Activated CD4-positive, alpha-beta T cell treated with anti-CD3 and anti-CD28 coated beads for 36 hours (primary cell): ENCODE measurements at regions of chr7 and their contacts with region 1.

Region 1: GRCh38 chr7:64665980-64666662 is at the start of gene ZNF107:
- DNase-seq: peak; percentile 92
- ATAC-seq: peak; percentile 100
- H3K4me3 Mint-ChIP-seq: peak within 1 kb of the TSS; percentile 95
- H3K27ac Mint-ChIP-seq: peak within 1 kb of the TSS; percentile 97
- H3K4me1 Mint-ChIP-seq: peaks cover 48% of the 10 kb centered on the region
- H3K27me3 Mint-ChIP-seq: no peaks in the 10 kb centered on the region
- total RNA-seq, gene ZNF107: 16.5 to 19.7 TPM

Region 2: GRCh38 chr7:63925623-63926460 is 740.3 kb before region 1 on chr7:
- CTCF ChIA-PET with region 1: no interaction called
- POLR2A ChIA-PET with region 1: no interaction called
- intact Hi-C with region 1: loop called in 1 of 2 experiments (anchors 1 kb)
- DNase-seq: peak; percentile 95
- ATAC-seq: peak; percentile 97
- H3K4me3 Mint-ChIP-seq: peak overlapping the region; percentile 87
- H3K27ac Mint-ChIP-seq: peak overlapping the region; percentile 93
- H3K4me1 Mint-ChIP-seq: peaks cover 16% of the 10 kb centered on the region
- H3K27me3 Mint-ChIP-seq: no peaks in the 10 kb centered on the region

Region 3: GRCh38 chr7:64313740-64314491 is 352.2 kb before region 1 on chr7 and contains the start of gene ZNF736:
- CTCF ChIA-PET with region 1: no interaction called
- POLR2A ChIA-PET with region 1: interaction called, 4 read pairs
- intact Hi-C with region 1: loop called (anchors 2 to 5 kb)
- DNase-seq: peak; percentile 93
- ATAC-seq: peak; percentile 100
- H3K4me3 Mint-ChIP-seq: peak within 1 kb of the TSS; percentile 89
- H3K27ac Mint-ChIP-seq: peak within 1 kb of the TSS; percentile 99
- H3K4me1 Mint-ChIP-seq: peaks cover 30% of the 10 kb centered on the region
- H3K27me3 Mint-ChIP-seq: no peaks in the 10 kb centered on the region
- total RNA-seq, gene ZNF736: 23.5 to 25.5 TPM

Region 4: GRCh38 chr7:64902806-64903721 is 236.9 kb after region 1 on chr7 and contains the start of gene ZNF273:
- CTCF ChIA-PET with region 1: no interaction called
- POLR2A ChIA-PET with region 1: no interaction called
- intact Hi-C with region 1: loop called (anchors 2 to 5 kb)
- DNase-seq: peak; percentile 96
- ATAC-seq: peak; percentile 100
- H3K4me3 Mint-ChIP-seq: peak within 1 kb of the TSS; percentile 98
- H3K27ac Mint-ChIP-seq: peak within 1 kb of the TSS; percentile 95
- H3K4me1 Mint-ChIP-seq: peaks cover 44% of the 10 kb centered on the region
- H3K27me3 Mint-ChIP-seq: no peaks in the 10 kb centered on the region
- total RNA-seq, gene ZNF273: 12.5 to 13.3 TPM

Region 5: DNA sequence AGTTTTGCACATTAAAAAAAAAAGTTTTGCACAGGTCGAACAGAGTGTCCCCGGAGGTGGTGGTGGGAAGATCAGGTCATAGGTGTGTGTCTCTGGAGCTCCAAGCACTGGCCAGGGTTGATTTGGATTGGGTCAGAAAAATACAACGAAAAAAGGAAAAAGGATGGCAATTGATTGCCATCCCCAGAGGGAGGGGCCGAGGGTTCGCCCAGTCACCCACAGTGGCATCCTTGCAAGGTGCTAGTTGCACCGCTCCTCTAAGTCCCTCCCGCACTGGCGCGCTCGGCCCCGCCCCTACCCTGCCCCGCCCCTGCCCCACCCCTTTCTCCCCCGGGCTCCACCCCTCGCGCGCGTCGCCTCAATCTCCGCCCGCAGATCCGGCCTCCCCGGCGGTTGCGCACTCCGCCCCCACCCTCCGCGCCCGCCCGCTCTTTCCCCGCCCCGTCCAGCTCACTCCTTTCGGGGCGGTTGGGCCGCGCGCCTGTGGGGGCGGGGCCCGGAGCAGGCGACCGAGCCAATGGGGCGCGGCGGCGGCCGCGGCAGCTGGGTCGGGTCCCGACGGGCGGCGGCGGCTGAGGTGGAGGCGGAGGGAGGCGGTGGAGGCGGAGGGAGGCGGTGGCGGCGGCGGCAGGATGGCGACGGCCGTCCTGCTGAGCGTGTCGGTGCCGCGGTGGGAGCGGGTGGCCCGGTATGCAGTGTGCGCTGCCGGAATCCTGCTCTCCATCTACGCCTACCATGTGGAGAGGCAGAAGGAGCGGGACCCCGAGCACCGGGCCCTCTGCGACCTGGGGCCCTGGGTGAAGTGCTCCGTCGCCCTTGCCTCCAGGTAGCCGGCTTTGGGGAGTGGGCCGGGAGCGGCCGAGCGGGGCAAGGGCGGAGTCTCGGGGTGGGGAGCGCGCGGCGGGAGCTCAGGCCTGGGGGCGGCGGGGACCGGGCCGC is 371.9 kb after region 1 on chr7:
- CTCF ChIA-PET with region 1: no interaction called
- POLR2A ChIA-PET with region 1: no interaction called
- intact Hi-C with region 1: loop called in 1 of 2 experiments (anchors 2 kb)
- DNase-seq: peak; percentile 97
- ATAC-seq: peak; percentile 93
- H3K4me3 Mint-ChIP-seq: peak overlapping the region; percentile 82
- H3K27ac Mint-ChIP-seq: no peak overlapping the region
- H3K4me1 Mint-ChIP-seq: peaks cover 13% of the 10 kb centered on the region
- H3K27me3 Mint-ChIP-seq: no peaks in the 10 kb centered on the region